ENCODE measurements at regions of chr6 and their contacts with region 1.

Region 1: DNA sequence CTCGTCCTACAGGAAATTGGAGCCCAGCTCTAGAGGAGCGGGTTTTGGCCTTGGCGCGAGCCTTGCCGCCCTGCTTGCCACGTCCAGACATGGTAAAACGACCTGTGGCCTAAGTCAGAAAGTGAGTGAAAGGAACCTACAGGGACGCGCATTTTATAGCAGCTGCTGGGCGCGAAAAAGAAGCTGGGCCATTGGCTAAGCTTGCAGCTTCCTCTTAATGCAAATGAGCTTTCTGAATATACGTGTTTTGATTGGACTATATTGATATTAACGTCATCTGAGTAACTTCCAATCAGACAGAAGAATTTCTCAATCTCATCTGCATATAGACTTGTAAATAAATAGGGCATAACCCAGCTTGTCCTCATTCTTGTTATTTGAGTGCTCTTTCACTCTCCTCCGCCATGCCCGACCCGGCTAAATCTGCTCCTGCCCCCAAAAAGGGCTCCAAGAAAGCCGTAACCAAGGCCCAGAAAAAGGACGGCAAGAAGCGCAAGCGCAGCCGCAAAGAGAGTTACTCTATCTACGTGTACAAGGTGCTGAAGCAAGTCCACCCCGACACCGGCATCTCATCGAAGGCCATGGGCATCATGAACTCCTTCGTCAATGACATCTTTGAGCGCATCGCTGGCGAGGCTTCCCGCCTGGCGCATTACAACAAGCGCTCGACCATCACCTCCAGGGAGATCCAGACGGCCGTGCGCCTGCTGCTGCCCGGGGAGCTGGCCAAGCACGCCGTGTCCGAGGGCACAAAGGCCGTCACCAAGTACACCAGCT is 18.9 kb downstream of the OR2B2 start:
- DNase-seq: peak; percentile 75 to 95 (median 91)
- H3K4me3 ChIP-seq: peak overlapping the region; percentile 82
- H3K4me3 Mint-ChIP-seq: no peak overlapping the region
- H3K27ac ChIP-seq: peak overlapping the region; percentile 79
- H3K27ac Mint-ChIP-seq: peak overlapping the region in 3 of 8 donors; percentile 94 to 97 (median 97)
- H3K4me1 ChIP-seq: peaks cover 19% of the 10 kb centered on the region
- H3K4me1 Mint-ChIP-seq: peaks cover 29 to 44% (median 40%) of the 10 kb centered on the region in 3 donors
- H3K27me3 ChIP-seq: no peaks in the 10 kb centered on the region
- H3K27me3 Mint-ChIP-seq: peaks cover 0 to 2% of the 10 kb centered on the region in 2 donors

Region 2: DNA sequence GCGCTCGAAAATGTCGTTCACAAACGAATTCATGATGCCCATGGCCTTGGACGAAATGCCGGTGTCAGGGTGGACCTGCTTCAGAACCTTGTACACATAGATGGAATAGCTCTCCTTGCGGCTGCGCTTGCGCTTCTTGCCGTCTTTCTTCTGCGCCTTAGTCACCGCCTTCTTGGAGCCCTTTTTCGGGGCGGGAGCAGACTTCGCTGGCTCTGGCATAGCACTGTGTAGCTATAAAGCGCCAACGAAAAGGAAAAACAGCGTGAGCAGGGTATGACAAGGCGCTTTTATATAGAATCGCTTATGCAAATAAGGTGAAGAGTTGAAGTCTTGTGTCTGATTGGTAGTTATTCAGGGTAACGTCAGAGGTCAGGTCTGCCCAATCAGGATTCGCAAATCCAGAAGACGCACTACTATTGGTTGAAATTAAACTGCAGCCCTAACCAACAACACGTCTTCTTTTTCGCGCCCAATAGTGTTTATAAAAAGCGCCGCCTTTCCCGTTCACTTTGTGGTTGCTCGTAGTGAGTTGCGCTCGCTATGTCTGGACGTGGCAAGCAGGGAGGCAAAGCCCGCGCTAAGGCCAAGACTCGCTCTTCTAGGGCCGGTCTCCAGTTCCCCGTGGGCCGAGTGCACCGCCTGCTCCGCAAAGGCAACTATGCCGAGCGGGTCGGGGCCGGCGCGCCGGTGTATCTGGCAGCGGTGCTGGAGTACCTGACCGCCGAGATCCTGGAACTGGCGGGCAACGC is 760.5 kb before region 1 on chr6:
- CTCF ChIA-PET with region 1: interaction called, 22 read pairs
- POLR2A ChIA-PET with region 1: interaction called, 76 read pairs
- DNase-seq: peak; percentile 77 to 98 (median 96)
- H3K4me3 ChIP-seq: peak overlapping the region; percentile 75
- H3K4me3 Mint-ChIP-seq: no peak overlapping the region
- H3K27ac ChIP-seq: peak overlapping the region; percentile 89
- H3K27ac Mint-ChIP-seq: no peak overlapping the region
- H3K4me1 ChIP-seq: peaks cover 20% of the 10 kb centered on the region
- H3K4me1 Mint-ChIP-seq: peaks cover 7 to 21% (median 16%) of the 10 kb centered on the region in 3 donors
- H3K27me3 ChIP-seq: no peaks in the 10 kb centered on the region
- H3K27me3 Mint-ChIP-seq: peaks cover 0 to 2% of the 10 kb centered on the region in 2 donors

Region 3: GRCh38 chr6:27479319-27480182 is 413.7 kb before region 1 on chr6:
- CTCF ChIA-PET with region 1: interaction called, 4 read pairs
- POLR2A ChIA-PET with region 1: interaction called, 11 read pairs
- DNase-seq: peak; percentile 75 to 92 (median 87)
- H3K4me3 ChIP-seq: peak overlapping the region; percentile 77
- H3K4me3 Mint-ChIP-seq: no peak overlapping the region
- H3K27ac ChIP-seq: peak overlapping the region; percentile 98
- H3K27ac Mint-ChIP-seq: no peak overlapping the region
- H3K4me1 ChIP-seq: peaks cover 17% of the 10 kb centered on the region
- H3K4me1 Mint-ChIP-seq: peaks cover 0 to 8% (median 4%) of the 10 kb centered on the region in 3 donors
- H3K27me3 ChIP-seq: no peaks in the 10 kb centered on the region
- H3K27me3 Mint-ChIP-seq: no peaks in the 10 kb centered on the region

Region 4: DNA sequence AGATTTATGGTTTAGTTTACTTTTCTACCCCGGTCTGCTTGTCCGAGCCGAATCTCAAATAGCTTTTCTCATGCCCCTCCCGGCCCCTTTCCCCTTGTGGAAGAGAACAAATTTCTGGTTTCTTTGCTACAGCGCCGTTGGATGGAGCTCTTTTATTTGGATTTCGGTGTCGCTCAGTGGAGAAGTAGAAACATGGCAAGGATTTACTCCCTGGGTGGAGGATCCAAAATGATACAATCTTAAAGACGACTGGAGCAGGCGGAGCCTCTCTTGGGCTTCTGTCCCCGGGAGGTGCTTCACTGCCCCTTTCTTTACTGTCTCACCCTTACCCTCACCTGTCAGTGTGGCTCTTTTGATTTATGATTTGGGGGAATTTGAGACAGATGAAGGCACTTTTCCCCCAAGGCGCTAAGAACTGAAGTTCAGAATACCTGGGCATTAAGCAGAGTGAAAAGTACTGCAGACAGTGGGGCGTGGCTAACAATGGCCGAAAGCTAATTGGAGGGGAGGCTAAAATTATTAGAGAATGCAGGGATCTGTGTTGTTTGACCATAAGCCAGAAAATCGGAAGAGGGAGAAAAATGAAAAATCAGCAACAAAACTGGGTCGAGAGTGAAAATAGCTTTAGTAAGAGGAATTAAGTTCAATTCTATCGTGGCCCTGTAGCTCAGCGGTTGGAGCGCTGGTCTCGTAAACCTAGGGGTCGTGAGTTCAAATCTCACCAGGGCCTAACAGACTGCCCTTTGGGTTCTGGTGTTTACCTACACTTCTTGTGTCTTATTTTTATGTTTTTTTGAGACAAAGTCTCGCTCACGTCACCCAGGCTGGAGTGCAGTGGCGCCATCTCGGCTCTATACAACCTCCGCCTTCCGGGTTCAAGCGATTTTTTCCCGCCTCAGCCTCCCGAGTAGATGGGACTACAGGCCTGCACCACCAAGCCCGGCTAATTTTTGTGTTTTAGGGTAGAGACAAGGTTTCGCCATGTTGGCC is 275.3 kb before region 1 on chr6:
- CTCF ChIA-PET with region 1: no interaction called
- POLR2A ChIA-PET with region 1: no interaction called
- DNase-seq: no peak
- H3K4me3 ChIP-seq: no peak overlapping the region
- H3K4me3 Mint-ChIP-seq: peak overlapping the region in 3 of 7 donors; percentile 0 to 10 (median 4)
- H3K27ac ChIP-seq: peak overlapping the region; percentile 33
- H3K27ac Mint-ChIP-seq: peak overlapping the region in 1 of 8 donors; percentile 49
- H3K4me1 ChIP-seq: no peaks in the 10 kb centered on the region
- H3K4me1 Mint-ChIP-seq: peaks cover 12 to 19% (median 18%) of the 10 kb centered on the region in 3 donors
- H3K27me3 ChIP-seq: peaks cover 25% of the 10 kb centered on the region
- H3K27me3 Mint-ChIP-seq: peaks cover 44 to 75% of the 10 kb centered on the region in 2 donors

Region 5: GRCh38 chr6:27795697-27796494 is 97.4 kb before region 1 on chr6:
- CTCF ChIA-PET with region 1: interaction called, 18 read pairs
- POLR2A ChIA-PET with region 1: interaction called, 10 read pairs
- DNase-seq: peak in 4 of 5 donors; percentile 39 to 77 (median 64)
- H3K4me3 ChIP-seq: no peak overlapping the region
- H3K4me3 Mint-ChIP-seq: peak overlapping the region in 1 of 7 donors; percentile 40
- H3K27ac ChIP-seq: no peak overlapping the region
- H3K27ac Mint-ChIP-seq: peak overlapping the region in 5 of 8 donors; percentile 3 to 64 (median 53)
- H3K4me1 ChIP-seq: peaks cover 20% of the 10 kb centered on the region
- H3K4me1 Mint-ChIP-seq: peaks cover 22 to 29% (median 28%) of the 10 kb centered on the region in 3 donors
- H3K27me3 ChIP-seq: peaks cover 8% of the 10 kb centered on the region
- H3K27me3 Mint-ChIP-seq: peaks cover 10% of the 10 kb centered on the region in 2 donors

Region 6: GRCh38 chr6:27825025-27825793 is 68.0 kb before region 1 on chr6:
- CTCF ChIA-PET with region 1: interaction called, 71 read pairs
- POLR2A ChIA-PET with region 1: interaction called, 65 read pairs
- DNase-seq: no peak
- H3K4me3 ChIP-seq: peak overlapping the region; percentile 91
- H3K4me3 Mint-ChIP-seq: peak overlapping the region; percentile 82 to 97 (median 90)
- H3K27ac ChIP-seq: peak overlapping the region; percentile 96
- H3K27ac Mint-ChIP-seq: peak overlapping the region; percentile 93 to 100 (median 98)
- H3K4me1 ChIP-seq: peaks cover 14% of the 10 kb centered on the region
- H3K4me1 Mint-ChIP-seq: peaks cover 31 to 42% (median 38%) of the 10 kb centered on the region in 3 donors
- H3K27me3 ChIP-seq: no peaks in the 10 kb centered on the region
- H3K27me3 Mint-ChIP-seq: no peaks in the 10 kb centered on the region

Region 7: GRCh38 chr6:27871924-27872638 is 21.2 kb before region 1 on chr6:
- CTCF ChIA-PET with region 1: interaction called, 229 read pairs
- POLR2A ChIA-PET with region 1: interaction called, 623 read pairs
- DNase-seq: peak; percentile 69 to 95 (median 91)
- H3K4me3 ChIP-seq: peak overlapping the region; percentile 71
- H3K4me3 Mint-ChIP-seq: peak overlapping the region; percentile 82 to 95 (median 88)
- H3K27ac ChIP-seq: peak overlapping the region; percentile 71
- H3K27ac Mint-ChIP-seq: peak overlapping the region; percentile 90 to 99 (median 94)
- H3K4me1 ChIP-seq: peaks cover 24% of the 10 kb centered on the region
- H3K4me1 Mint-ChIP-seq: peaks cover 31 to 39% (median 37%) of the 10 kb centered on the region in 3 donors
- H3K27me3 ChIP-seq: no peaks in the 10 kb centered on the region
- H3K27me3 Mint-ChIP-seq: peaks cover 0 to 3% of the 10 kb centered on the region in 2 donors